Transverse colon (tissue), 4 donors: ENCODE measurements at regions of chr20 and their contacts with region 1.

Region 1: DNA sequence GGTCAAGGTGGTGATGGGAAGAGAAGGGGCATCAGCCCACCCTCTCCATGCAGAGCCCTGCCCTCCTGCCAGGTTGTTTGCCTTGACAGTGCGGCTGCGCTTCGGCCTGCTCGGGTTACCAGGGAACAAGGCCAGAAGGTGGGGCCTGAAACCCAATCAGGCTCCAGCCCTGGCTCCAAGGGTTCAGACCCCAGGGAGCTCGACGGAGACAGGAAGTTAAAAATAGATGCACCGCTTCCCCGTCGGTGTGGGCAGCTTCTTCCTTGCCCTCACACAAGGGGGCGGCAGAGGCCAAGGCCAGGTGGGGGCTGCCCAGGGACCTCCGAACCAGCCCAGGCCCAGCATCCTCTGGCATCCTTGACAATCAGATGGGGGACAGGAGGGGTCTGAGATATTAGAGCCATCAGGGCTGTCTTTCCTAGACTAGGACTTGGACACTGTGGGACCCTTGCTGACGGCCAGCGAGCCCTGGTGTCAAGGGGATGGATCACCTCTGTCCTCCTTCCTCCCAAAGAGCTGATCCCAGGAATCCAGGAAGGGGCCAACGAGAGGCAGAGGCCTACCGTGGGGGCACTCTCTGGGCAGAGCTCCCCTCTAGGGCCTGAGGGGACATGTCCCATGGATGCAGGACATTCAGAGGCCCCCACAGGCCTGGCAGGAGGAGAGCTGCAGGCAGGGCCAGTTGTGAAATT is 65.2 kb downstream of the RIPOR3 start:
- DNase-seq: peak; percentile 26
- H3K4me3 ChIP-seq: no peak overlapping the region
- H3K27ac ChIP-seq: no peak overlapping the region
- H3K4me1 ChIP-seq: no peaks in the 10 kb centered on the region
- H3K27me3 ChIP-seq: no peaks in the 10 kb centered on the region
- CTCF ChIP-seq: peak; percentile 39 to 53 (median 42)
- EP300 ChIP-seq: no peak
- POLR2A ChIP-seq: no peak

Region 2: GRCh38 chr20:50704980-50705379 is 78.8 kb after region 1 on chr20:
- in situ Hi-C with region 1: no loop called
- intact Hi-C with region 1: loop called (anchors 10 kb)
- DNase-seq: no peak
- H3K4me3 ChIP-seq: no peak overlapping the region
- H3K27ac ChIP-seq: no peak overlapping the region
- H3K4me1 ChIP-seq: no peaks in the 10 kb centered on the region
- H3K27me3 ChIP-seq: no peaks in the 10 kb centered on the region
- CTCF ChIP-seq: no peak
- EP300 ChIP-seq: no peak
- POLR2A ChIP-seq: no peak

Region 3: DNA sequence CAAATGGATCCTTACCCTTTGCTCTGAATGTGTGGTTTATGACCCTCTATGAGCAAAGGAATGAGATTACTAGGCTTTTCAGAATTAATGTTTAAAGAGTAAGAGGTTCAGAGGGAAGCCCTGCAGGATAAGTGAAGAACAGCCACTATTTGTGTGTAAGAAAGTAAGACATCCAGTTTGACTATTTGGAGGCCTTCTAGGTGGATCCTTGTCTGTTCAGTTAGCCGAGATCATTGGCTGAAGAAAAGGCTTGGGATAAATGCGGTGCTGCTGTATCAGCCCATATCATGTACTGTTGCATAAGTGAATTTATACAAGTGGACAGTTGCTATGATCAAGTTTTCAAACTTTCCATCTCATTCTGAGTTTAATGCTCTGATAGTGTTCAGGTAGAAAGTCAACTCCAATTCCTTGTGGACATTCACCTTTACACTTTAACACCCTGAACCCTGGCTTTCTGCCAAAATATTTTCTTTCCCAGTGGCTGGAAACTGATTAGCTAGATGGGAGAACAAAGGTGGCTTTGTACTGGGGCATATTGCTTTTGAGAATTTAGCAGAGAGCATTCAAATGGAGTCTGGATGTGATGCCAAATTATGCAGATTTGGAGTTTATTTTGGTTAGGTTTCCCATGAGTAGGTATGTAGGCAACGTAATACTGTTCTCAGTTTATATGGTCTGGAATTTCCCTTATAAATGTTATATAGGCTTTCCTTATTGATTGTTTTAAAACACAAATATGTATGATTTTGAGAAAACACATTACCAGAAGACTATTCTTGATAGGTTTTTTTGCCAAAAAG is 120.2 kb after region 1 on chr20:
- in situ Hi-C with region 1: no loop called
- intact Hi-C with region 1: loop called (anchors 5 kb)
- DNase-seq: no peak
- H3K4me3 ChIP-seq: no peak overlapping the region
- H3K27ac ChIP-seq: peak overlapping the region; percentile 71 to 88 (median 86)
- H3K4me1 ChIP-seq: peaks cover 20 to 72% (median 40%) of the 10 kb centered on the region in 4 donors
- H3K27me3 ChIP-seq: no peaks in the 10 kb centered on the region
- CTCF ChIP-seq: peak in 2 of 5 experiments; percentile 19 to 25
- EP300 ChIP-seq: no peak
- POLR2A ChIP-seq: no peak